Activated CD4-positive, alpha-beta memory T cell treated with anti-CD3 and anti-CD28 coated beads for 36 hours (primary cell): ENCODE measurements at regions of chr4 and their contacts with region 1.

Region 1: DNA sequence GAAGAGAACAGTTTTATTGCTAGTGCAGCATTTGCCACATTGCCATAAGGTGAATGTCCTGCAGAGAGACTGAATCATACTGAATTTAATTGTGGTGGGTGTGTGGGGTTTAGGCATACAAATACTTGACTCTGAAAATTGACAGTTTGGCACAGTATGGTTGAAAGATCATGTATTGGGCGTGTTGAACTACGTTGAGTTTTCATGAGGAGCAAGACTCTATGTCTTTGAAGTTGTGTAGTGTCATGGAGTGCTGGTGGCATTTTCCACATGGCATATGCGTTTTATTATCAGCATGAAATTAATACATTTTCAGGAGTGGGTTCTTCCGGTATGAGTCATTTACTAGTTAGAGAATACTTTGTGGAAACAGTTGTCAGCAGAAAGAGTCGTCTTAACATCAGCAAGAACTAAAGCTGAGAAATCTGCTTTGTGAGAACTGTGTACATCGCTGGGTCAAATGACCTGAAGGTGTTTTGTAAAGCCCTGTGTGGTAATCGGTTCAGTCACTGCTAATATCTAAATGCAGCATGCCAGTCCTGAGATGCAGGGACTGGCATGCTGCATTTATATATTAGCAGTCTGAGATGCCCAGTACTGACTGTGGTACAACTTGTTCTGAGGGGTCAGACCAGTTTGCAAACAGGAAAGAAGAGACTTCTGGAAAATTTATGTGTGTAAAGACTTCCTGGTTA is 50.3 kb downstream of the ARHGAP10 start:
- DNase-seq: no peak
- H3K4me3 Mint-ChIP-seq: no peak overlapping the region
- H3K27ac Mint-ChIP-seq: peak overlapping the region; percentile 55
- H3K4me1 Mint-ChIP-seq: peaks cover 59% of the 10 kb centered on the region
- H3K27me3 Mint-ChIP-seq: no peaks in the 10 kb centered on the region

Region 2: DNA sequence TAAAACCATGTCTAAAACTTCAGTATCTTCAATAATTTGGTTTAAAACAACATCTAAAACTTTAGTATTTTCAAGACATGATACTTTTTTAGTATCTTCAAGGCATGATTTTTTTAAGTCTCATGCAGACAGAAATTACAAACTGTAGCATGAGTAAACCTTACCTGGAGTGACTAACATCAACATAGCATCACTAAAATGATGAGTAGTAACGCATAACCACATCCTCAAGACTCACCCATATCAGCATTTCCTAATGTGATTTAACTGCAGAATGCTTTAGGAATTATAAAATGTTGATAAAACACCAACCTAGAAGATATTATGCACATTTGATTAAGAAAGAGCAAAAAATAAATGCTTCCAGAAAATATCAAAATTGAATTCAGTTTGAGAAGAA is 321.1 kb before region 1 on chr4:
- CTCF ChIA-PET with region 1: no interaction called
- POLR2A ChIA-PET with region 1: no interaction called
- intact Hi-C with region 1: no loop called
- DNase-seq: no peak
- H3K4me3 Mint-ChIP-seq: no peak overlapping the region
- H3K27ac Mint-ChIP-seq: no peak overlapping the region
- H3K4me1 Mint-ChIP-seq: no peaks in the 10 kb centered on the region
- H3K27me3 Mint-ChIP-seq: no peaks in the 10 kb centered on the region

Region 3: GRCh38 chr4:147578051-147578476 is 204.2 kb before region 1 on chr4:
- CTCF ChIA-PET with region 1: no interaction called
- POLR2A ChIA-PET with region 1: no interaction called
- intact Hi-C with region 1: no loop called
- DNase-seq: no peak
- H3K4me3 Mint-ChIP-seq: no peak overlapping the region
- H3K27ac Mint-ChIP-seq: no peak overlapping the region
- H3K4me1 Mint-ChIP-seq: no peaks in the 10 kb centered on the region
- H3K27me3 Mint-ChIP-seq: peaks cover 5% of the 10 kb centered on the region

Region 4: DNA sequence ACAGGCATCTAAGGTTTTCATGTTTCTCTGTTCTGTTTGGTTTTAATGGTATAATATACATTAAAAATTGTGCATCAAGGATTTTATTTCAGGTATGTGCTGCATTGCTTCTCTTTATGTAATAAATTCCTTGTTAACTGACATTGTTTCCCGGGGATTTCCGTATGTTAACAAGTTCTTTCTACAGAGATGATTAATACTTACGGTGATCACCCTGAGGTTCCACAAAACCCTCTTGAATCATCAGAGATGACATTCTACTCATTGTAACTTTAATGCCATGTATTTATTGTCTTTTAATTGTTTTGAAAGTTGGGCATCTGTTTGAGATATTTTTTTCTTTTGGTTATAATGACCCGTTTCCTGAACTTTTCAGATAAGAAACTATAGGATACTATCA is 12.8 kb before region 1 on chr4:
- CTCF ChIA-PET with region 1: no interaction called
- POLR2A ChIA-PET with region 1: interaction called, 3 read pairs
- intact Hi-C with region 1: loop called (anchors 1 kb)
- DNase-seq: no peak
- H3K4me3 Mint-ChIP-seq: no peak overlapping the region
- H3K27ac Mint-ChIP-seq: no peak overlapping the region
- H3K4me1 Mint-ChIP-seq: peaks cover 17% of the 10 kb centered on the region
- H3K27me3 Mint-ChIP-seq: no peaks in the 10 kb centered on the region

Region 5: DNA sequence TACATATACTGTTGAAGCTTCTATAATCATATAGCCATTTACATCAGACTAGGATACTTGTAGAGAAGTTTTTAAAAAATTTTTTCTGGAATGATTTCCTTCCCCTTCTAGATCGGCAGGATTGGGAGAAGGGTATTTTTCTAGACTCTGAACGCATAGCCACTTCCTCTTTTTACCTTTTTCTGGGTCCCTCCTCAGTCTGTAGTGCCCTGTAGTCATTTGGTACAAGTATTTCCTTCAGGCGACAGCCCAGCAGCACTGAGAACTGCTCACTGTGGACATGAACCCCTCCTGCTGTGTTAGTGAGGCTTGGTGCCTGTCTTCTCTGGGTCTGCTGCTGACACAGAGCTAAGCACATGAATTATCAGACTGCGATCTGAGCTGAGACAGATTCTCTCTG is 205.0 kb after region 1 on chr4:
- CTCF ChIA-PET with region 1: no interaction called
- POLR2A ChIA-PET with region 1: no interaction called
- intact Hi-C with region 1: no loop called
- DNase-seq: no peak
- H3K4me3 Mint-ChIP-seq: no peak overlapping the region
- H3K27ac Mint-ChIP-seq: no peak overlapping the region
- H3K4me1 Mint-ChIP-seq: no peaks in the 10 kb centered on the region
- H3K27me3 Mint-ChIP-seq: no peaks in the 10 kb centered on the region